Heart left ventricle (tissue), 16 donors: ENCODE measurements at regions of chr11 and their contacts with region 1.

Region 1: GRCh38 chr11:48093795-48094642 is 113.7 kb downstream of the PTPRJ start:
- DNase-seq: peak in 2 of 5 donors; percentile 40 to 44
- ATAC-seq: peak; percentile 59 to 90 (median 83)
- H3K4me3 ChIP-seq: no peak overlapping the region
- H3K27ac ChIP-seq: peak overlapping the region in 1 of 12 donors; percentile 3
- H3K4me1 ChIP-seq: peaks cover 0 to 37% (median 10%) of the 10 kb centered on the region in 12 donors
- H3K27me3 ChIP-seq: no peaks in the 10 kb centered on the region
- CTCF ChIP-seq: no peak
- POLR2A ChIP-seq: no peak

Region 2: GRCh38 chr11:48081151-48082010 is 12.6 kb before region 1 on chr11:
- intact Hi-C with region 1: loop called in 1 of 10 experiments (anchors 1 kb)
- DNase-seq: peak; percentile 75 to 89 (median 79)
- ATAC-seq: peak; percentile 97 to 98 (median 98)
- H3K4me3 ChIP-seq: peak overlapping the region in 8 of 12 donors; percentile 17 to 43 (median 24)
- H3K27ac ChIP-seq: peak overlapping the region; percentile 47 to 91 (median 80)
- H3K4me1 ChIP-seq: peaks cover 0 to 61% (median 17%) of the 10 kb centered on the region in 12 donors
- H3K27me3 ChIP-seq: no peaks in the 10 kb centered on the region
- CTCF ChIP-seq: peak in 2 of 12 donors; percentile 5 to 18
- POLR2A ChIP-seq: no peak

Region 3: DNA sequence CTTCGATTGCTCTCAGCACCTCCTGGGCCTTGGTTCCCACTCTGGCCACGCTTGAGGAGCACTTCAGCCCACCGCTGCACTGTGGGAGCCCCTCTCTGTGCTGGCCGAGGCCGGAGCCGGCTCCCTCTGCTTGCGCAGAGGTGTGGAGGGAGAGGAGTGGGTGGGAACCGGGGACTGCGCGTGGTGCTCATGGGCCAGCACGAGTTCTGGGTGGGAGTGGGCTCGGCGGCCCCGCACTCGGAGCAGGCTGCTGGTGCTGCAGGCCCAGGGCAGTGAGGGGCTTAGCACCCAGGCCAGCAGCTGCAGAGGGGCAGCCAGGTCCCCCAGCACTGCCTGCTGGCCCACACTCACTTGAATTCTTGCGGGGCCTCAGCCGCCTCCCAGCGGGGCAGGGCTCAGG is 134.7 kb after region 1 on chr11:
- intact Hi-C with region 1: no loop called
- DNase-seq: peak in 1 of 5 donors; percentile 54
- ATAC-seq: no peak
- H3K4me3 ChIP-seq: no peak overlapping the region
- H3K27ac ChIP-seq: no peak overlapping the region
- H3K4me1 ChIP-seq: no peaks in the 10 kb centered on the region
- H3K27me3 ChIP-seq: no peaks in the 10 kb centered on the region
- CTCF ChIP-seq: no peak
- POLR2A ChIP-seq: no peak